PC-3 (cell line): ENCODE measurements at regions of chr6 and their contacts with region 1.

Region 1: GRCh38 chr6:166556871-166557322 is 29.6 kb downstream of the RAMACL start:
- DNase-seq: peak; percentile 96
- ATAC-seq: peak; percentile 93
- H3K4me3 ChIP-seq: peak overlapping the region; percentile 53; the same call in 1 of the 2 replicates
- H3K27ac ChIP-seq: peak overlapping the region; percentile 93
- H3K4me1 ChIP-seq: peaks cover 43% of the 10 kb centered on the region
- H3K27me3 ChIP-seq: no peaks in the 10 kb centered on the region
- CTCF ChIP-seq: no peak

Region 2: DNA sequence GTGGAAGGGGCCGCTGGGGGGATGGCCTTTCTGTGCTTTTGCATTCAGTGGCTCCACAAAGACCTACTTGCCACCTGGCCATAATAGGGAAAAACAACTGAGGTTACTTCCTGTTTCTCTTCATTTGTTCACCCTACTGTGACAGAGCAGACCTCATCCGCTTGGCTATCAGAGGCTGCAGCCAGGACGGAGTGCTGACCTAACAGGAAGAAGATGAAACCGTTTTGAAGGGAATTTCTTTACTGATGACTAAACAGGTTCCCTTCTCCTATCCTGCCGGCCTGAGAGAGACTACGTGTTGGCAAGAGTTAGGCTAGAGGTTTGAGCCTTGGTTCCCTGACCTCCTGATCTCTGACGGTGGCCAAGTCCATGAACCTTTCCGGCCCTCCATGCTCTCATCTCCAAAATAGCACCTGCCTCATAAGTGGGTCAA is 270.0 kb before region 1 on chr6:
- CTCF ChIA-PET with region 1: no interaction called
- POLR2A ChIA-PET with region 1: no interaction called
- intact Hi-C with region 1: no loop called
- DNase-seq: no peak
- ATAC-seq: no peak
- H3K4me3 ChIP-seq: no peak overlapping the region
- H3K27ac ChIP-seq: no peak overlapping the region
- H3K4me1 ChIP-seq: no peaks in the 10 kb centered on the region
- H3K27me3 ChIP-seq: peaks cover 28% of the 10 kb centered on the region
- CTCF ChIP-seq: no peak

Region 3: DNA sequence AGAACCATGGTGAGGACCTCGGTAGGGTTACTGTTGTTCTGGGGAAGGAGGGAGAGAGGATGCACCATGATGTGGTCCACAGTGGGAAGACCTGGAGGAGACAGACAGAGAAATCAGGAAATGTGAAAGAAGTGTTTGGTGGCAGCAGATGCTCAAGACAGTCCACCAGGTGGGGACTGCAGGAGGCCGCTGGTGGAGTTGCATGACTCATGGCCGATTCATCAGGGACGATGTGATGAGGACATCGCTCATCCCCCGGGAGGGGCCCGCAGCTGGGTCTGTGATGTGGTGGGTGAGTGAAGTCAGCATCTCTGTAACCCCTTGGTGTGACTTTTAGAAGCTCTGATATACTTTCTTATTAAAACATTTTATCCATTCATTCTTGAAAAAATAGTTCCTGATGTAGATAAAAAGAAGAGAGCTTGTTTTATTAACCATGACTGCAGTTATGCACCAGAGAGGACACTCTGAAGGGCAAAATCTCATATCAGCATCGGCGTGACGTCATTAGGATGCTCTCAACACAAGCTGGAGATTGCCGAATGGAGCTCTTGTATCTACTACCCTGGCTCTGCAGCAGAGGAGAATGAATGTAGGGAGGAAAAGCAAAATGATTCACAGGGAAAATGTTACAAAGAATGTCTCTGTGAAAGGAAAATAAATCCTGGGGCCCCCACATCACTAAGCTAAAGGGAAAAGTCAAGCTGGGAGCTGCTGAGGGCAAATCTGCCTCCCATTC is 41.7 kb before region 1 on chr6:
- CTCF ChIA-PET with region 1: interaction called, 4 read pairs
- POLR2A ChIA-PET with region 1: no interaction called
- intact Hi-C with region 1: loop called (anchors 1 kb)
- DNase-seq: peak; percentile 88
- ATAC-seq: peak; percentile 96
- H3K4me3 ChIP-seq: no peak overlapping the region
- H3K27ac ChIP-seq: no peak overlapping the region
- H3K4me1 ChIP-seq: peaks cover 8% of the 10 kb centered on the region
- H3K27me3 ChIP-seq: no peaks in the 10 kb centered on the region
- CTCF ChIP-seq: peak; percentile 66

Region 4: DNA sequence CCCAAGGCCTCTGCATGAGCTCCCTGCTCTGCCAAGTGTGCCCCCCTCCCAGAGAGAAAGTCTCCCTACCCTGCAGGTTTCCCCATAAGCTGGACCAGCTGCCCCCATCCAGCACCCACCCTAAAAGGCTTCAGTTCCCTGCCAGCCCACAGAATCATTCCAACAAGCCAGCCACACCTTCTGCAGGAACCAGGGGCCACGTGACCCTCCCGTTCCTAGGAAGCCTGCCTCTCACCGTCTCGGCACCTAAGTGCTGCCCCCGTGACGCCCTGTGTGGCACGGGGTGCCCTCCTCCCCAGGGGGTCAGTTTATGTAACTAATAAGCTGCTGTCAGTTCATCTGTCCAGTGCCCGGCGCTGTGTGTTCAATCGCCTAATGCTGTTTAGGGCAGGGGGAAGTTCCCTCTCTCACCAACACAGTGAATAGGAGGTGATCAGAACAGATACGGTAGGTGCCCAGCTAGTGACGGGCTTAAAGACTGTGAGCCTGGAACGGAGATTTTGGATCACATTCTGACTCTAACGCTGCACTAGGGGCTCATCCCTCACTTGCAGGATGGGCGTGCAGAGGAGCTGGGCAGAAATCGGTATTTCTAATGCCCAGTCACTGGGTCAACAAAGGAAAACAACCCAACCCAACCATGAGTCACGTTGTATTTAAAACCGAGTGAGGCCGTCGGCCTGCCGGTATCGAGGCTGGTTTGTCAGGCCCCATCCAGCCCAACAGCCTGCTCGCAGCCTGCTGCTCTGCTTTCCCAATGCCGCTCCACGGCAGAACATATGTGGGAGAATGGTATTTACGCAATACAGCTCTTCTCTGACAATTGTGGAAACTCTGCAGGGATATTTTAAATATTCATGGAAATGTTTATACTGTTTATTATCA is 26.4 kb before region 1 on chr6:
- CTCF ChIA-PET with region 1: no interaction called
- POLR2A ChIA-PET with region 1: no interaction called
- intact Hi-C with region 1: loop called (anchors 1 kb)
- DNase-seq: peak; percentile 91
- ATAC-seq: peak; percentile 86
- H3K4me3 ChIP-seq: peak overlapping the region; percentile 59
- H3K27ac ChIP-seq: peak overlapping the region; percentile 100
- H3K4me1 ChIP-seq: peaks cover 39% of the 10 kb centered on the region
- H3K27me3 ChIP-seq: no peaks in the 10 kb centered on the region
- CTCF ChIP-seq: no peak

Region 5: GRCh38 chr6:166572370-166573261 is 15.7 kb after region 1 on chr6:
- CTCF ChIA-PET with region 1: interaction called, 3 read pairs
- POLR2A ChIA-PET with region 1: no interaction called
- intact Hi-C with region 1: loop called (anchors 2 kb)
- DNase-seq: peak; percentile 58
- ATAC-seq: peak; percentile 93
- H3K4me3 ChIP-seq: no peak overlapping the region
- H3K27ac ChIP-seq: peak overlapping the region; percentile 51
- H3K4me1 ChIP-seq: peaks cover 15% of the 10 kb centered on the region
- H3K27me3 ChIP-seq: no peaks in the 10 kb centered on the region
- CTCF ChIP-seq: no peak

Region 6: DNA sequence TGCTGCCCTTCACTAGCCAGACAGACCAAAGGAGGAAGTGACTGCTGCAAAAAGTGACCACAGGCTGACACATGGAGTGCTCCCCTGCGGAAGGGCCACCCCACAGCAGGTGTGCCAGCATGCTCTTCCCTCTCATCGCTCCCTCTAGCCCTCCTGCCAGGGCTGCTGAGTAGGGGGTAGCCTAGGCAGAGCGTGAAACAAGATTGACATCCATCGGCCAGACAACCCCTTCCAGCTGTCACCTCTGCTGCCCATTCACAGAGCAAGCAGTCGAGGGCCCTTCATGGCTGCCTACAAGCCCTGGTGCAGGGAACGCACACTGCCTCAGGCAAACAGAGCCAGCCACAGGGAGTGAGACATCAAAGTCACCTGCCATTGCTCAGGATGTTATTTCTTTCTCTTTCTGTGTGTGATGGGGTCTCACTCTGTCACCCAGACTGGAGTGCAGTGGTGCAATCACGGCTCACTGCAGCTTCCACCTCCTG is 172.1 kb after region 1 on chr6:
- CTCF ChIA-PET with region 1: no interaction called
- POLR2A ChIA-PET with region 1: no interaction called
- intact Hi-C with region 1: loop called (anchors 10 kb)
- DNase-seq: no peak
- ATAC-seq: no peak
- H3K4me3 ChIP-seq: no peak overlapping the region
- H3K27ac ChIP-seq: no peak overlapping the region
- H3K4me1 ChIP-seq: peaks cover 28% of the 10 kb centered on the region
- H3K27me3 ChIP-seq: no peaks in the 10 kb centered on the region
- CTCF ChIP-seq: no peak